Activated CD4-positive, alpha-beta memory T cell treated with anti-CD3 and anti-CD28 coated beads, Interleukin-2, amount 10 ng/mL, durations not matched to agents 7 days and 5 days (primary cell): ENCODE measurements at regions of chr12 and their contacts with region 1.

Region 1: GRCh38 chr12:7141351-7142005 is 11.3 kb downstream of the CLSTN3 start:
- DNase-seq: no peak
- H3K4me3 Mint-ChIP-seq: no peak overlapping the region
- H3K27ac Mint-ChIP-seq: no peak overlapping the region
- H3K4me1 Mint-ChIP-seq: peaks cover 10% of the 10 kb centered on the region
- H3K27me3 Mint-ChIP-seq: no peaks in the 10 kb centered on the region

Region 2: GRCh38 chr12:7118881-7119280 is 22.6 kb before region 1 on chr12:
- CTCF ChIA-PET with region 1: no interaction called
- POLR2A ChIA-PET with region 1: no interaction called
- DNase-seq: no peak
- H3K4me3 Mint-ChIP-seq: no peak overlapping the region
- H3K27ac Mint-ChIP-seq: no peak overlapping the region
- H3K4me1 Mint-ChIP-seq: peaks cover 3% of the 10 kb centered on the region
- H3K27me3 Mint-ChIP-seq: no peaks in the 10 kb centered on the region

Region 3: DNA sequence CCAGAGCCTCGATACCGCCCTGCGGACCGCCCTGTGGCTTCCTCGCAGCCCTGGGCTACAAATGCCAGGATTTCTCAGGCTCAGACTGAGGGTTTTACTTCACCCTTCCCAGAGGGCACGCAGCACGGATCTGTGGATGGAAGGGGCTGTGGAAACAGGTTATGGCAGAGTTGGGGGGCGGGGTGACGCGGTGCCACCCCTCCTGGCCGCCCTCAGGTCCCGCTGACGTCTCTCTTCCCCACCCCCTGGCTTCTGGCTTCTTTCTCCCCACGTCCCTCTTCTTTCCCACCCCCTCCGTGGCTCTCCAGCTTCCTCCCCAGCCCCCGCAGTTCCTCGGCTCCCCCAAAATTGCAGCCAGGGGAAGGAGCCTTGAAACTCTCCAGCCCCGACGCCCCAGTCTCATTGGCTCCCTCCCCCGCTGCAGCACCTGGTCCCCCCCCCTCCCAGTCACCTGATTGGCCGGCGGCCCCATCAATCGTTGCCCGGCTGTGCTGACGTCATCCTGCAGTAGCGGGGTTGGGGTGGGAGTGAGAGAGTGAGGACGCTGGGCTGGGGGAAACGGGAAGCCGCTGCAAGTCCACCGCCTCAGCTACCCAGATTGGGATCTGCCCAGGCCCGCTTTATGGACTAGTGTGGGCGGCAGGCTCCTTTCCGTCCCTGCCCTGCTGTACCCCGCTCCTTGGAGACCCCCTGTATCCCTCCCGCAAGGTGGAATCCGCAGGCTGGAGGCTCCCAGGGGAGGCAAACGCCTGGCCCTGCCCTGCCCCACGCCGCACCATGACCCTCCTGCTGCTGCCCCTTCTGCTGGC is 11.4 kb before region 1 on chr12 and contains the start of gene CLSTN3:
- CTCF ChIA-PET with region 1: interaction called, 4 read pairs
- POLR2A ChIA-PET with region 1: interaction called, 14 read pairs
- DNase-seq: peak; percentile 89
- H3K4me3 Mint-ChIP-seq: peak within 1 kb of the TSS; percentile 100
- H3K27ac Mint-ChIP-seq: peak within 1 kb of the TSS; percentile 91
- H3K4me1 Mint-ChIP-seq: peaks cover 43% of the 10 kb centered on the region
- H3K27me3 Mint-ChIP-seq: no peaks in the 10 kb centered on the region
- total RNA-seq, gene CLSTN3: 148 to 152 TPM